ENCODE measurements at regions of chr4 and their contacts with region 1.

Region 1: GRCh38 chr4:80184053-80184790 is 13.1 kb upstream of the PRDM8 start:
- DNase-seq: peak; percentile 85 to 91
- ATAC-seq: peak; percentile 95 to 98 (median 96)
- H3K4me3 ChIP-seq: peak overlapping the region; percentile 11 to 80 (median 61)
- H3K27ac ChIP-seq: peak overlapping the region in 8 of 10 donors; percentile 31 to 90 (median 64)
- H3K4me1 ChIP-seq: peaks cover 3 to 38% (median 29%) of the 10 kb centered on the region in 9 donors
- H3K27me3 ChIP-seq: peaks cover 0 to 65% (median 45%) of the 10 kb centered on the region in 7 donors
- CTCF ChIP-seq: peak; percentile 60 to 99 (median 91)

Region 2: DNA sequence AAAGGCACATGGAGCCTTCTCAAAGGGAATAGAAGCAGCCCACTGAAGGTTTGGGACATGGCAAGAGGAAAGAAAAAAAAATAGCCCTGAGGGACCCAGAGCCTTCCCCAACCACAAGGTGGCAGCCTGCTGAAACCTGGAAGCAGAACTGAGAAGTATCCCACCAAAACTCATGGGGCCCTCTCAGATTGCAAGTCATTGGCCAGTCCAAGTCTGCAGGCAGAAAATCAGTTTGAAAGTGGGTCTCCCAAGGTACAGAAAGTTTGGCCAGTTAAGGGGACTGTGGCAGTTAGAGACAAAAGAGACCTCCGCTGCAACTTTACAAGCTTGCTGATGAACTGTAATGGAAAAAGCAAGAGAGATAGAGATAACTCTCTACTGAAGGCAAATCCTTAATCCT is 267.0 kb before region 1 on chr4:
- intact Hi-C with region 1: loop called in 1 of 10 experiments (anchors 10 kb)
- DNase-seq: peak; percentile 5 to 9
- ATAC-seq: peak in 1 of 8 donors; percentile 45
- H3K4me3 ChIP-seq: no peak overlapping the region
- H3K27ac ChIP-seq: no peak overlapping the region
- H3K4me1 ChIP-seq: peaks cover 0 to 9% (median 0%) of the 10 kb centered on the region in 9 donors
- H3K27me3 ChIP-seq: no peaks in the 10 kb centered on the region
- CTCF ChIP-seq: peak; percentile 13 to 68 (median 51)

Region 3: GRCh38 chr4:80138551-80139538 is 45.4 kb before region 1 on chr4:
- intact Hi-C with region 1: loop called in 1 of 10 experiments (anchors 10 kb)
- DNase-seq: no peak
- ATAC-seq: peak in 1 of 8 donors; percentile 42
- H3K4me3 ChIP-seq: no peak overlapping the region
- H3K27ac ChIP-seq: peak overlapping the region in 1 of 10 donors; percentile 61
- H3K4me1 ChIP-seq: peaks cover 0 to 40% (median 0%) of the 10 kb centered on the region in 9 donors
- H3K27me3 ChIP-seq: no peaks in the 10 kb centered on the region
- CTCF ChIP-seq: no peak

Region 4: DNA sequence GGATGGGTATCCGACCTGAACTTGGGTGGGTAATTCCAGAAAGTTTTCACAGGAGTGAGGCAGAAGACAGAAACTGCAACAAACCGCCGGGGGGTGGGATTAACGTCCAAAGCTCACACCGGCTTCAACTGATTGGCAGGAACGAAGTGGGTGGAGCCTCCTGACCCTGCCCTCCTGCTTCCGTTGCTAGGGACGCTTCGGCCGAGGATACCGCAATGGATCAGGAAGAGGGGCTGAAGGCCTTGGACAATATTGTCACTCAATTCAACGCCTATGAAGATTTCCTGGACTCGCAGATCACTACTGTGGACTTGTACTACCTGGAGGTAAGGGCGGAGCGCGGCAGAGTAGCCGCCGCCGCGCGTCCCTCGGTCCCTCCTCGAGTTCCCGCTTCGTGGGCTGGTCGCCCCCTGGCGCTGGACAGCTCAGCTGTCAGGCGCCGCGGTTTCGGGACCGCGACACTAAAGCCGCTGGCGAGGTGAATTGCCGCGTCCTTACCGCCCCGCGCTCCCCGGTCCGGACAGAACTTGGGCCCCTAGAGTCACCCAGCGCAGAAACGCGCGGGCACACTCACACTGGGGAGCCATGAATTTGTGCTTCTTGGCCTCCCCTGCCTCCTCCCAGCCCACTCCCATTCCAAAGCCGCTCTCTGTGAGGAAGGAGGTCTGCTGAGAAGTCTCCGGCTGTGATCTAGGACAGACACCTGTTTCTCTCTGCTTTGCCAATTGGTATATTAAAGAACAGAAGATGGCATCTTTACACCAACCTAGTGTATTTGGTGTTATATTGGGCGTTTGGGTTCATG is 151.5 kb after region 1 on chr4 and contains the start of gene CFAP299:
- intact Hi-C with region 1: loop called in 1 of 10 experiments (anchors 5 kb)
- DNase-seq: peak; percentile 70 to 74
- ATAC-seq: peak; percentile 92 to 99 (median 96)
- H3K4me3 ChIP-seq: peak within 1 kb of the TSS; percentile 28 to 72 (median 58)
- H3K27ac ChIP-seq: no peak within 1 kb of the TSS
- H3K4me1 ChIP-seq: peaks cover 0 to 16% (median 6%) of the 10 kb centered on the region in 9 donors
- H3K27me3 ChIP-seq: peaks cover 0 to 46% (median 20%) of the 10 kb centered on the region in 7 donors
- CTCF ChIP-seq: peak in 7 of 9 donors; percentile 25 to 64 (median 51)
- total RNA-seq, gene CFAP299: 0.93 TPM in 1 of 10 donors, not detected in the others